Natural killer cell (primary cell): ENCODE measurements at regions of chr16 and their contacts with region 1.

Region 1: GRCh38 chr16:28069971-28070794 is 6.7 kb upstream of the GSG1L start:
- DNase-seq: no peak
- ATAC-seq: peak in 1 of 3 donors; percentile 17
- H3K4me3 ChIP-seq: no peak overlapping the region
- H3K4me3 Mint-ChIP-seq: no peak overlapping the region
- H3K27ac ChIP-seq: no peak overlapping the region
- H3K27ac Mint-ChIP-seq: no peak overlapping the region
- H3K4me1 ChIP-seq: no peaks in the 10 kb centered on the region
- H3K4me1 Mint-ChIP-seq: no peaks in the 10 kb centered on the region
- H3K27me3 ChIP-seq: no peaks in the 10 kb centered on the region
- H3K27me3 Mint-ChIP-seq: peaks cover 12 to 16% of the 10 kb centered on the region in 2 donors
- CTCF ChIP-seq: no peak

Region 2: DNA sequence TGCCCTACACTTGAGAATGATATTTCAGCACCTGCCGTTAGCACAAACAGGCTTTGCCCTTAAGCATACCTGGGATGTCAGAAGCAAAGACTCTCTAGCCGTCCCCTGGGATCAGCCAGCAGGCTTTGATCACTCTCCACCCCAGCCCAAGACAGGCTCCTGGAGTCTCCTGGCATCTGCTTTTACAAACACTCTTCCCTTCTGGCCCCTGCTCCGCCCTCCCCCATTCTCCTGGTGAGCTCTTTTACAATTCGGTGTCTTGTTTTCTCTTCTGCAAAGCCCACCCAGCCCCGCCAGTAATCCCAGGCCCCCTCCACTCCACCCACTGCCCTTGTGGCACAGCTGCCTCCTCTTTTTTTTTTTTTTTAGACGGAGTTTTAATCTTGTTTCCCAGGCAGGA is 469.8 kb before region 1 on chr16:
- intact Hi-C with region 1: loop called (anchors 5 kb)
- DNase-seq: no peak
- ATAC-seq: no peak
- H3K4me3 ChIP-seq: no peak overlapping the region
- H3K4me3 Mint-ChIP-seq: no peak overlapping the region
- H3K27ac ChIP-seq: no peak overlapping the region
- H3K27ac Mint-ChIP-seq: no peak overlapping the region
- H3K4me1 ChIP-seq: no peaks in the 10 kb centered on the region
- H3K4me1 Mint-ChIP-seq: peaks cover 0 to 4% of the 10 kb centered on the region in 2 donors
- H3K27me3 ChIP-seq: no peaks in the 10 kb centered on the region
- H3K27me3 Mint-ChIP-seq: no peaks in the 10 kb centered on the region
- CTCF ChIP-seq: no peak

Region 3: GRCh38 chr16:27685807-27686206 is 384.4 kb before region 1 on chr16:
- intact Hi-C with region 1: loop called (anchors 5 kb)
- DNase-seq: no peak
- ATAC-seq: no peak
- H3K4me3 ChIP-seq: no peak overlapping the region
- H3K4me3 Mint-ChIP-seq: no peak overlapping the region
- H3K27ac ChIP-seq: no peak overlapping the region
- H3K27ac Mint-ChIP-seq: no peak overlapping the region
- H3K4me1 ChIP-seq: no peaks in the 10 kb centered on the region
- H3K4me1 Mint-ChIP-seq: no peaks in the 10 kb centered on the region
- H3K27me3 ChIP-seq: no peaks in the 10 kb centered on the region
- H3K27me3 Mint-ChIP-seq: no peaks in the 10 kb centered on the region
- CTCF ChIP-seq: no peak

Region 4: DNA sequence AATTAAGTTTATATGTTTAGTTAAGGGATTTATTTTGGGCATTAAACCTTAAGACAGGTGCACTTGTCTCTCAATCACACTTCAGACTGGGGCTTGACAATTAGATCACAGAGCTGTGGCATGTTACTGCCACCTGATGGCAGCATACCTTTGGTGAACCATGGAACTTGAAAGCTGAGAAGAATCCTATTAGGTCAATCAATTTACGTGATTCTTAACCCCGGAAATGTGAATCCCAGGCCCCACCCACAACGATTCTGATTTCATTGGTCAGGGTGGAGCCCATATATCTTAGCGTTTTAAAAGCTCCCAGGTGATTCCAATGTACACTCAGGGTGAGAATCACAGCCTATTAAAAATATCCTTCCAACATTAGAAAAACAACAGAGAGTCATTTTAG is 97.7 kb before region 1 on chr16:
- intact Hi-C with region 1: loop called (anchors 2 kb)
- DNase-seq: peak in 1 of 2 donors; percentile 67
- ATAC-seq: peak in 1 of 3 donors; percentile 75
- H3K4me3 ChIP-seq: no peak overlapping the region
- H3K4me3 Mint-ChIP-seq: no peak overlapping the region
- H3K27ac ChIP-seq: no peak overlapping the region
- H3K27ac Mint-ChIP-seq: no peak overlapping the region
- H3K4me1 ChIP-seq: no peaks in the 10 kb centered on the region
- H3K4me1 Mint-ChIP-seq: no peaks in the 10 kb centered on the region
- H3K27me3 ChIP-seq: no peaks in the 10 kb centered on the region
- H3K27me3 Mint-ChIP-seq: peaks cover 8 to 11% of the 10 kb centered on the region in 2 donors
- CTCF ChIP-seq: peak; percentile 45

Region 5: DNA sequence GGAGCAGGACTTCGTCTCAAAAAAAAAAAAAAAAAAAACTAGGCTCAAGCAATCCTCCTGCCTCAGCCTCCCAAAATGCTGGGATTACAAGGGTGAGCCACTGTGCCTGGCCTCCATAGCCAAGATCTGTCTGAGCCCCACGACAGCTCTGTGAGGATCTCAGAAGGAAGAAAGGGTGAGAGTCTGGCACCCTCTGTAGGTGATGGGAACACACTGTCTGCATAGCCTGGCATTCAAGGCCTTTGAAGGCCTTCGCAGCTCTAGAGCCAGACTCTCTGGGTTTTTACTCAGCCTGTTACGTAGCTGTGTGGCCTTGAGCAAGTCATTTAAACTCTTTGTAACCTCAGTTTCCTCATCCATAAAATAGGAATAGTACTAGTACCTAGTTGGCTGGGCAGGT is 147.9 kb after region 1 on chr16:
- intact Hi-C with region 1: loop called (anchors 1 kb)
- DNase-seq: peak; percentile 35 to 89
- ATAC-seq: peak; percentile 95 to 100 (median 100)
- H3K4me3 ChIP-seq: no peak overlapping the region
- H3K4me3 Mint-ChIP-seq: no peak overlapping the region
- H3K27ac ChIP-seq: no peak overlapping the region
- H3K27ac Mint-ChIP-seq: no peak overlapping the region
- H3K4me1 ChIP-seq: no peaks in the 10 kb centered on the region
- H3K4me1 Mint-ChIP-seq: no peaks in the 10 kb centered on the region
- H3K27me3 ChIP-seq: no peaks in the 10 kb centered on the region
- H3K27me3 Mint-ChIP-seq: no peaks in the 10 kb centered on the region
- CTCF ChIP-seq: peak; percentile 51

Region 6: DNA sequence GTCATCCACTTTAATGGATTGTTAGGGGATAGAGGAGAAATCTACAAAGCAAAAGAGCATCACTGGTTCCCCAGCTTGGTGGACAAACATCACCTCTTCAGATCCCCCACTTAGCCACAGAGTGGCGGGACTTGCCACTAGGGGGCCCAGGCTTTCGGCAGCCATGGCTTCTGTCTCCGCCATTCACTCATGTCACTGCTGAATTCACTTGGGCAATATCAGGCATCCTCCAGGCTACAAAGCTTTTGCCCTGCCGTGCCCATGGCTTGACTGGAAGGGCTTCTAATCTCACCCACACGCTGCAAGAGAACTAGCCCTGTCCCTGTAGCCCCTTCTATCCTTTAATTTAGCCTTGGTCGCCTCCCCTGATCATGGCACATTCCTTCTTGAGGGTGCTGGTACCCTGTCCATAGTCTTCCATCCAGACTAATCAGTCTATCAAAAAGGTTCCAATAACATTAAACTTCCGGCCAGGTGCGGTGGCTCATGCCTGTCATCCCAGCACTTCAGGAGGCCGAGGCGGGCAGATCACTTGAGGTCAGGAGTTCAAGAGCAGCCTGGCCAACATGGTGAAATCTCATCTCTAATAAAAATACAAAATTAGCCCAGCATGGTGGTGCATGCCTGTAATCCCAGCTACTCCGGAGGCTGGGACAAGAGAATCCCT is 256.9 kb after region 1 on chr16:
- intact Hi-C with region 1: no loop called
- DNase-seq: peak; percentile 51 to 78
- ATAC-seq: peak; percentile 73 to 95 (median 89)
- H3K4me3 ChIP-seq: no peak overlapping the region
- H3K4me3 Mint-ChIP-seq: no peak overlapping the region
- H3K27ac ChIP-seq: no peak overlapping the region
- H3K27ac Mint-ChIP-seq: peak overlapping the region in 1 of 2 donors; percentile 35
- H3K4me1 ChIP-seq: no peaks in the 10 kb centered on the region
- H3K4me1 Mint-ChIP-seq: peaks cover 7 to 23% of the 10 kb centered on the region in 2 donors
- H3K27me3 ChIP-seq: no peaks in the 10 kb centered on the region
- H3K27me3 Mint-ChIP-seq: no peaks in the 10 kb centered on the region
- CTCF ChIP-seq: peak; percentile 76